HepG2 (cell line): ENCODE measurements at regions of chr1 and their contacts with region 1.

Region 1: DNA sequence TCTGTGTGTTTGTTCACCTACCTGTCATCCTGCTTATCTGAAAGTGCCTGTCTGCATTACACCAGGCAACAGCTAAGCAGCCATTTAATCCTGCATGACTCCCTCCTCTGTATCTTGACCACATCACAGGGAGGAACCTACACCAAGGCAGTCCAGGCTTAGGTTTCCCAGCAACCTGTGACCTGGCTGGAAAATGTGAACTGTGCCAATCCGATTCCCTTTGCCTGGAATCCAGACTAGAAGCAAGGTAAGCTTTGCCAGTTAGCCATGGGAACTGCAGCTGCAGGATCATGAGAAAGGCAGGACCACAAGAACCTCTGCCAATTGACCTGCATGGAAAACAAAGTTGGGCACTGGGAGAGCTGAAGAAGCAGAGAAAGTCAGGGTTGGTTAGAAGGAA is 6.3 kb upstream of the ATP1B1 start:
- DNase-seq: no peak
- ATAC-seq: no peak
- H3K4me3 ChIP-seq: no peak overlapping the region
- H3K27ac ChIP-seq: no peak overlapping the region
- H3K4me1 ChIP-seq: peaks cover 57% of the 10 kb centered on the region
- H3K27me3 ChIP-seq: no peaks in the 10 kb centered on the region
- CTCF ChIP-seq: no peak
- EP300 ChIP-seq: no peak
- POLR2A ChIP-seq: no peak
- RAD21 ChIP-seq: no peak

Region 2: GRCh38 chr1:168799927-168800605 is 300.1 kb before region 1 on chr1:
- CTCF ChIA-PET with region 1: no interaction called
- POLR2A ChIA-PET with region 1: no interaction called
- in situ Hi-C with region 1: no loop called
- intact Hi-C with region 1: no loop called
- DNase-seq: no peak
- ATAC-seq: no peak
- H3K4me3 ChIP-seq: no peak overlapping the region
- H3K27ac ChIP-seq: peak overlapping the region; percentile 93
- H3K4me1 ChIP-seq: peaks cover 63% of the 10 kb centered on the region
- H3K27me3 ChIP-seq: no peaks in the 10 kb centered on the region
- CTCF ChIP-seq: no peak
- EP300 ChIP-seq: no peak
- POLR2A ChIP-seq: no peak
- RAD21 ChIP-seq: no peak

Region 3: GRCh38 chr1:168811176-168811575 is 289.0 kb before region 1 on chr1:
- CTCF ChIA-PET with region 1: no interaction called
- POLR2A ChIA-PET with region 1: no interaction called
- in situ Hi-C with region 1: no loop called
- intact Hi-C with region 1: no loop called
- DNase-seq: peak; percentile 52
- ATAC-seq: peak; percentile 43; the same call in 1 of the 3 replicates
- H3K4me3 ChIP-seq: no peak overlapping the region
- H3K27ac ChIP-seq: no peak overlapping the region
- H3K4me1 ChIP-seq: peaks cover 39% of the 10 kb centered on the region
- H3K27me3 ChIP-seq: no peaks in the 10 kb centered on the region
- CTCF ChIP-seq: no peak
- EP300 ChIP-seq: no peak
- POLR2A ChIP-seq: no peak
- RAD21 ChIP-seq: no peak

Region 4: DNA sequence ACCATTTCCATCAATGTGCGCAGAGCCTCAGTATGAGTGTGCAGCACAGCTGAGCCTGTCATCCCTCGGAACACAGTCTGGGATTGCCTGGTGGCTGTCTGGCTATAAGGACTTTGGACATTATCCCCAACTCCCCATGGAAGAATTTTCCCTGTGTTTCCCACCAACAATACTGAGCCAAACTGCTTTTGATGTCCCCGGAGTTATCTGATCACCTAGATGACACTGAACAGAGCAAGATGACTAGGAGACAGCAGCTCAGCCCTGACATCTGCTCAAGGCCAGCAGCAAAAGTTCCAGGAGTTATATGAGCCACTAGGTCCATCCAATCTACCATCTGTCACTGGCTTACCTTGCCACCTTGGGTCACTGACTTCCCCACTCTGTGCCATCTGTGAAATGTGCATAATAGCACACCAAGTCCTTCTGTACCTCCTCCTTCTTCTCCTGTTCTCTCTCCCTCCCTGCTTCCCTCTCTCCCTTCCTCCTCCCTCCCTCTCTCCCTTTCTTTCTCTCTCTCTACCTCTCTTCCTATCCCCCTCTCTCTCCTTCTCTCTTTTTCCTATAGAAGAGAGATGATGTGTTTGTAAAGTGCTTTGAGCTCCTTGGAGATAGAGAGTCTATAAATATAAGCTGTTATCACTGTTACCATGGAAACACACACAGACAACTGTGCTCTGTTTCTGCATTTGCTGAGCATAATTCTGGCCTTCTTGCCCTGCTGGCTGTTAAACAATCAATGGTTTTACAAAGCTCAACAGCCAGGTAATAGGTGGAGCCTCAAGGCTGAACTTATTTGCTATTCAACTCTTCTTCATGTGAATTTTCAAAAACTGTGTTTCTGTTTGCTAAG is 13.4 kb before region 1 on chr1:
- CTCF ChIA-PET with region 1: no interaction called
- POLR2A ChIA-PET with region 1: interaction called, 5 read pairs
- in situ Hi-C with region 1: no loop called
- intact Hi-C with region 1: loop called (anchors 2 kb)
- DNase-seq: peak; percentile 65
- ATAC-seq: peak; percentile 83
- H3K4me3 ChIP-seq: no peak overlapping the region
- H3K27ac ChIP-seq: peak overlapping the region; percentile 15
- H3K4me1 ChIP-seq: peaks cover 40% of the 10 kb centered on the region
- H3K27me3 ChIP-seq: no peaks in the 10 kb centered on the region; a peak in 1 of 5 replicates
- CTCF ChIP-seq: 0 out of 2 replicates have a peak, but pooled peaks have one; percentile 3
- EP300 ChIP-seq: no peak; a peak in 1 of 4 replicates
- POLR2A ChIP-seq: no peak
- RAD21 ChIP-seq: no peak

Region 5: GRCh38 chr1:169175461-169175860 is 75.3 kb after region 1 on chr1:
- CTCF ChIA-PET with region 1: no interaction called
- POLR2A ChIA-PET with region 1: no interaction called
- in situ Hi-C with region 1: no loop called
- intact Hi-C with region 1: no loop called
- DNase-seq: no peak
- ATAC-seq: no peak
- H3K4me3 ChIP-seq: no peak overlapping the region
- H3K27ac ChIP-seq: no peak overlapping the region
- H3K4me1 ChIP-seq: no peaks in the 10 kb centered on the region
- H3K27me3 ChIP-seq: no peaks in the 10 kb centered on the region
- CTCF ChIP-seq: no peak
- EP300 ChIP-seq: no peak
- POLR2A ChIP-seq: no peak
- RAD21 ChIP-seq: no peak